ENCODE measurements at regions of chr1 and their contacts with region 1.

Region 1: GRCh38 chr1:167066333-167067122 is 23.6 kb downstream of the GPA33 start:
- DNase-seq: peak; percentile 56 to 95
- H3K4me3 ChIP-seq: no peak overlapping the region
- CTCF ChIP-seq: peak in 1 of 3 donors; percentile 40
- POLR2A ChIP-seq: no peak

Region 2: DNA sequence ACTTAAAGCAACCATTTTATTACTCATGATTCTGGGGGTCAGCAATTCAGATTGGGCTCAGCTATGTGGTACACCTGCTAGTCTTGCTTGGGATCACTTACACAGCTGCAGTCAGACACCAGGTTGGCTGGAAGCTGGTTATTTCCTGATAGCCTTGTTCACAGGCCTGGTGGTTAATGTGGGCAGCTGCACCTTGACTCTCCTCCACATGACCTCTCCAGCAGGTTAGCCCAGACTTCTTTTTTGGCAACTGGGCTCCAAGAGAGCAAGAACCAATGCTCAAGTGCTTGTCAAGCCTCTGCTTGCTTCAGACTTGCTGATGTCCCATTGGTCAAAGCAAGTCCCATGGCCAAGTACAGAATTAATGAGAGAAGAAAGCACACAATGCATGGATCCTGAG is 239.1 kb before region 1 on chr1:
- intact Hi-C with region 1: no loop called
- DNase-seq: no peak
- H3K4me3 ChIP-seq: no peak overlapping the region
- CTCF ChIP-seq: no peak
- POLR2A ChIP-seq: no peak

Region 3: DNA sequence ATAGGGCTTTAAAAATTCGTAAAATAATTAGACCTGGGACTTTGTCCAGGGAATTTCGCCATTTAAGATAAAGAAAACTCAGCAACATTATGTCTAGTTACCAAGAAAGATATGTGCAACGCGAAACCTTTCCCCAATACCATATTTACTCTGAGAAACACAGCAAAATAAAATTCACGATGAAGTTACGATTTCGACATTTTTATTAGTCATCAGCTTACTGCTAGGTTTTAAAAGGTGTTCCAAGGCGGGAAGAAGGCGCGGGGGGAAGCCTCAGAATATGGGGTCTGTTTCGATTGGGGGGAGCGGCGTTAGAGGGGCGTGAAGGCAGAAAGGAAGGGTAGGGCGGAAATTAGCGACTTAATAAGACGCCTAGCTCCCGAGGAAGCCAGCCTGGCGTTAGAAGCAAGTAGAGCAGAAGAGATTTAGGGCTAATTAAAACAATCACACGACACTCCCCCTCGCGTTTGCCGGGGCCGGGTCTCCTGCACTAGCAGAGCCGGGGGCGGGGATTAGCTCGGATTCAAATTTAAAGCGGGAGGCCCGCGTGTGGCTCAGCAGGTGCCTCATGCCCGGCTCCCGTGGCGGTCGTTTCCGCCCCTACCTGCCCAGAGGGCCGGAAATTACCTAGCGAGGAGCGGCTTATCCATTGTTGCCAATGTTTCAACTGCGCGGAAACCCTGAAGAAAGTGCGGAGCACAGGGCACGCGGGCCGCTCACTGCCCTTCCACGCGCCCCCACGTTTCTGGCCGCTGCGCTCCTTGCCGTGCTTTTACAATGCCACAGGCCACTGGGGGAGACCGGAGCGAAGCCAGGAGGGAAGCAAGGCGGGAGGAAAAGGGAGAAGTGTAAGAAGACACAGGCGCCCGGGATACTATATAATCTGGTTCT is 153.4 kb after region 1 on chr1:
- intact Hi-C with region 1: loop called (anchors 10 kb)
- DNase-seq: peak; percentile 77 to 96
- H3K4me3 ChIP-seq: peak overlapping the region; percentile 63
- CTCF ChIP-seq: no peak
- POLR2A ChIP-seq: no peak

Region 4: DNA sequence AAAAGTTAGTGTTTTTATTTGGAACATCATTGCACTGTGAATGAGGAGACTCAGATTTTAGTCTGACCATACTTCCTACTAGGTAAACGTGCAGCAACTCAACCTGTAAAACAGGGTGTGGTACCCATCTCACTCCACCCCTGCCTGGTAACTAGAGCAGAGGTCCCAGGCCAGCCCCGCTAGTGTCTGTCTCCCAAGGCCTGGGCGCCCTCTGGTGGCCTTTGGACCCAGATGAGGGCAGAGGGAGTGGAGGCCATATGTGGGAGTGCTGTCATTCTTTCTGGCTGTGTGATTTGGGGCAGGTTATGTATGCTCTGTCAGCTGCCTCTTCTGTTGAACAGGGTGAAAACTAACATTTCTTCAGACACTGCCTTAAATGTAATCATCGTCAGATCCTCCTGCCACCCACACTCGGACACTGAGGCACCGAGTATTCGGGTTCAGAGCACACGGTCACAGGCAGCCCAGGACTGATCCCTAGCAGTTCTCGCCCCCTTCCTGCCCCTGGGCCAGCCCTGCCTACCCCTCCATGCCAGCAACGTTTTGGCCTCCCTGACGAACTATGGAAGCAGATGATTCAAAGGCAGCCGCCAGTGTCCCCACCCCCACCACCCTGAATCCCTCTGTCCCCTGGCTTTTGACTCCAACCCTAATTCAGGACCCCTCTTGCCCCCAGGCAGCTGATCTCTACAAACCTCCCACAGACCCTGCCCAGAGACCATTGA is 375.8 kb after region 1 on chr1:
- intact Hi-C with region 1: loop called (anchors 5 kb)
- DNase-seq: peak; percentile 81 to 95
- H3K4me3 ChIP-seq: no peak overlapping the region
- CTCF ChIP-seq: no peak
- POLR2A ChIP-seq: no peak

Region 5: GRCh38 chr1:167533851-167534300 is 467.3 kb after region 1 on chr1:
- intact Hi-C with region 1: loop called (anchors 10 kb)
- DNase-seq: peak in 1 of 2 donors; percentile 92
- H3K4me3 ChIP-seq: no peak overlapping the region
- CTCF ChIP-seq: no peak
- POLR2A ChIP-seq: no peak

Region 6: GRCh38 chr1:169060906-169061639 is 1994.5 kb after region 1 on chr1:
- intact Hi-C with region 1: no loop called
- DNase-seq: peak in 1 of 2 donors; percentile 29
- H3K4me3 ChIP-seq: no peak overlapping the region
- CTCF ChIP-seq: no peak
- POLR2A ChIP-seq: no peak

Measured in lower leg skin (tissue), 4 donors.